Activated CD8-positive, alpha-beta memory T cell treated with anti-CD3 and anti-CD28 coated beads, Interleukin-2, amount 10 ng/mL, durations not matched to agents 7 days and 5 days (primary cell): ENCODE measurements at regions of chr6 and their contacts with region 1.

Region 1: DNA sequence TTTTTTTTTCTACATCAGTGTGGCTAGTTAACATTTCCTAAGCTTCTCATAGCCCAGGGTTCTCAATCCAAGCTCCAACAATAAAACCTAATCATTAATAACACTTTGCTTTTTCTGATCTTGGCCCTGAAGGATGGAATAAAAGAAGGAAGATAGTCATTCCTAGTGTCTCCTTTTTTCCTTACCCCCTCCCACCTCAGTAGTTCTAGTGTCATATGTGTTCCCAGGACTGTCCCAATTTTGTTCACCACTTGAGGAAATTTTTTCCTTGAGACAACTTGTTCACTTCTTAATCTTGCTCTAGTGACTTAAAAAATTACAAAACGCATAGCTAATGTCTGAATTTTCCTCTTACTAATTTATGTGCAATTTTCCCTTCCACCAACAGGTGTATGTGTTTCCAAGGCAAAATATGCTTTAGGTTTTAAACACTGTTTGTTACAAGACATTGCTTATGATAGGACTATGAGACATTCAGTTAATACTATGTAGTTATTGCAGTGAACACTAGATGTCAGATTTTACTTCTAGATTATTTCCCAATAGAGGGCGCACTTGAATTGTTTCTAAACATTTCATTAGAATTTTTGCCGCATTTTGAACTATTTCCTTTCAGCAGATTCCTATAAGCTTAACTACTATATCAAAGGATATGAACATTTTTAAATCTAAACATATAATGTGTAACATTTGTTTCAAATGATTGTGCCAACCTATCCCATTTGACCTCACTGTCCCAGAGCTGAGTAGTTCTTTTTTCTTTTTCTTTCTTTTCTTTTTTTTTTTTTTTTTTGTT is 18.5 kb upstream of the C6orf141 start:
- DNase-seq: no peak
- ATAC-seq: peak; percentile 69
- H3K4me3 Mint-ChIP-seq: no peak overlapping the region
- H3K27ac Mint-ChIP-seq: no peak overlapping the region
- H3K4me1 Mint-ChIP-seq: peaks cover 2% of the 10 kb centered on the region
- H3K27me3 Mint-ChIP-seq: peaks cover 22% of the 10 kb centered on the region

Region 2: GRCh38 chr6:49423817-49424216 is 108.2 kb before region 1 on chr6:
- CTCF ChIA-PET with region 1: no interaction called
- DNase-seq: no peak
- ATAC-seq: no peak
- H3K4me3 Mint-ChIP-seq: no peak overlapping the region
- H3K27ac Mint-ChIP-seq: no peak overlapping the region
- H3K4me1 Mint-ChIP-seq: no peaks in the 10 kb centered on the region
- H3K27me3 Mint-ChIP-seq: peaks cover 3% of the 10 kb centered on the region

Region 3: GRCh38 chr6:49519660-49520059 is 12.3 kb before region 1 on chr6:
- CTCF ChIA-PET with region 1: interaction called, 11 read pairs
- DNase-seq: no peak
- ATAC-seq: no peak
- H3K4me3 Mint-ChIP-seq: no peak overlapping the region
- H3K27ac Mint-ChIP-seq: no peak overlapping the region
- H3K4me1 Mint-ChIP-seq: no peaks in the 10 kb centered on the region
- H3K27me3 Mint-ChIP-seq: peaks cover 3% of the 10 kb centered on the region

Region 4: DNA sequence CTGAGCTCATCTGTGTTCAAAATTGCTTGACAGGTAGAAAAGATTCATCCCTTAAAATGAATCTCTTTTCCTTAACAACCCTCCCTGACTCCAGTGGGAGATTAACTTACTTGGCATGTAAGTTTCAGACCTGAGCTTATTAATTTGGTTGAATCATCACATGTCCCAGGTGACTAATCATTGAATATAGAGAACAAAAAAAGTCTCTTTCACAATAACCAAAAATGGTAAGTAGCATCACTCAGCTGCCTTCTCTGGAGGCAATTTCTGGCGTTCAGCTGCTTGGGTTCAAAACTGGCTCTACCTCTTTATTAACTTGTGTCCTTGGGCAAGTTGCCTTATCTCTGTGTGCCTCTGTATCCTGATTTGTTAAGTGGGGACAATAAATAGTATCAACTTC is 21.4 kb after region 1 on chr6:
- CTCF ChIA-PET with region 1: interaction called, 12 read pairs
- DNase-seq: no peak
- ATAC-seq: no peak
- H3K4me3 Mint-ChIP-seq: no peak overlapping the region
- H3K27ac Mint-ChIP-seq: no peak overlapping the region
- H3K4me1 Mint-ChIP-seq: peaks cover 18% of the 10 kb centered on the region
- H3K27me3 Mint-ChIP-seq: peaks cover 42% of the 10 kb centered on the region

Region 5: DNA sequence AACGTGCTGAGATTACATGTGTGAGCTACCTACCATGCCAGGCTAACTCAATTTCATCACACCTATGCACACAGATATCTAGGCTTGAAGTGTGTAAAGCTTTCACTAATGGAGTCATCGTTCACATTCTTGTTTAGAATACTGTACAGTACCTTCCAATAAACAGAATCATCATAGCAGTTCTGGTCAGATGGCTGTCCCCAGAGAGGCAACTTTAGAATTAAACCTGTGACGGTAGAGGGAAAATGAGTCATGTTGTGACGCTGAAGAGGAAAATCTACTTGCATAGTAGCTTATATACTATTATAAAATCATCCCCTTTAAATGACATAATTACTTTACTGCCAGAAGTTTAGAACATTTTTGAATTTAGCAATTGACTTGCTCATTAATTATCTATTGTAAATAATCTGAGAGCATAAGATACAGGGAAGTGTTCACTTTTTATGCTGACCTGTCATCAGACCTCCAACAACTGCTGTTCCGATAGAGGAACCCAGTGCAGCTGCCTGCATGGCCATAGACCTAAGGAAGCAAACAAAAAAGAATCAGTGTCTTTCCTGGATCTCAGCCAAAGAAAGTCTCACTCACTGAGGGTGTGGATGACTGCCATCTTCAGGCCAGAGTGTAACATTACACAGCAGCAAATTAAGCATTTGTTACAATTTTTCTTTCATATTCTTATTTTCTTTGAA is 74.9 kb after region 1 on chr6:
- CTCF ChIA-PET with region 1: interaction called, 13 read pairs
- DNase-seq: no peak
- ATAC-seq: peak; percentile 53
- H3K4me3 Mint-ChIP-seq: no peak overlapping the region
- H3K27ac Mint-ChIP-seq: no peak overlapping the region
- H3K4me1 Mint-ChIP-seq: no peaks in the 10 kb centered on the region
- H3K27me3 Mint-ChIP-seq: peaks cover 4% of the 10 kb centered on the region

Region 6: DNA sequence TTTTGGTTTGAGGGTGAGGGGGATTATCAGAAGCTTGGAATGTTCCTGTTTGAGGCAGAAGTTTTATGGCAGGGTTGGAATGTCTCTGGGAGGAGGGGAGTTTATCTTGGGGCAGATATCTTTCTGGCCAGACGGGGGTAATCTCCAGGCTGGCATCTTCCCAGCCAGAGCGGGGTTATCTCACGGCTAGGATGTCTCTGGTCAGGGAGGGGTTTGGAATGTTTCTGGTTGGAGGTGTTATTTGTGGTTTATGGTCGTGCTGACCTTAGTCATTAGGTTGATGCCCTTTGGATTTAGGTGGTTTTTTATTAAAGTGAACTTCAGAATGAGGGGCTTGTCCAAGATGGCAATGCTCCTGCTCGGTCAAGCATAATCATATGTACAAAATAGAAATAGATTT is 240.3 kb after region 1 on chr6:
- CTCF ChIA-PET with region 1: no interaction called
- DNase-seq: no peak
- ATAC-seq: no peak
- H3K4me3 Mint-ChIP-seq: no peak overlapping the region
- H3K27ac Mint-ChIP-seq: no peak overlapping the region
- H3K4me1 Mint-ChIP-seq: no peaks in the 10 kb centered on the region
- H3K27me3 Mint-ChIP-seq: no peaks in the 10 kb centered on the region